Activated T-helper 1 cell treated with anti-CD3 and anti-CD28 coated beads, Interleukin-12 subunit alpha, Interleukin-12 subunit beta, Interleukin-2, Interleukin-4 antibody, amounts not matched to agents 30 ng/mL and 10 ng/mL and 1 ng/mL, durations not matched to agents 14 hours and 24 hours and 36 hours (primary cell): ENCODE measurements at regions of chr7 and their contacts with region 1.

Region 1: DNA sequence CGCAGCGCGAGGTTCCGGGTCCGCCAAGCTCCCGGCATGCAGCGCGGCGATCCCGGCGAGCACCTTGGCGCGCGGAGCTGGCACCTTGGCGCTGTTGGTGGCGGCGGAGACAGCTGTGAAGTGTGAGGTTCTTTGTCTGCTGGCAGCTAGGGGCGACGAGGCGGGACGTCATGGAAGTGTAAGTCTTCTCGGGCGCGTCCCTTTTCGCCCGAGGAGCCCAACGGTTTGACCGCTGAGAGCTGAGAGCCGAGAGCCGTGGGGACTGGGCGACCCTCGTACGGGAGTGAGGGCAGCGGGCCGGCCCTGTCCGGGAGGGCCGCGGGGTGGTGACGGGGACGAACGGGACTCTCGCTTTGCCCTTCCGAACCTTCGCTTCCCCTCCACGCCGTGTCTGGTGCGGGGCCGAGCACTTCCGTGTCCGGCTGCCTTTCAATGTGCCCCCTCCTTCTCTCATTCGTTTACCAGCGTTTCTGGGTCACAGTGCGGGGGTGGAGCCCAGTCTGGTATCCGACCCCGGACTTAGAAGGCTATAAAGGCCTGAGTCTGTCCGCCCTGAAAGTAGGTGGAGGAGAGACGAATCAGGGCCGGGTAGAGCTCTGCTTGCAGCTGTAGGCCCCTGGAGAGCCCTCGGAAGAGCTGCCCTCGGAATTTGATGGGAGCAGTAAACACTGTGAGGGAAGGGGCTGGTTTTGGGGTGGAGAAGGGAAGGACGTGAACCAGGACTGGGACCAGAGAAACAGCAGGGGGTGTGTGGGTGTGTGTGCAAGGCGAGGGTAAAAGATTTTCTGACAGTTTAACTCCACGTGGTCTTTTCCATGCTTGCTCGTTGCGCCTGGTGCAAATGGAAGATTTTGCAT is at the start of gene CRCP:
- DNase-seq: peak; percentile 79
- H3K4me3 Mint-ChIP-seq: peak within 1 kb of the TSS; percentile 99
- H3K27ac Mint-ChIP-seq: peak within 1 kb of the TSS; percentile 95
- H3K4me1 Mint-ChIP-seq: peaks cover 40% of the 10 kb centered on the region
- H3K27me3 Mint-ChIP-seq: no peaks in the 10 kb centered on the region
- total RNA-seq, gene CRCP: 41.0 and 44.1 TPM in 2 replicates

Region 2: GRCh38 chr7:65981965-65982792 is 132.8 kb before region 1 on chr7 and contains the start of gene GUSB:
- intact Hi-C with region 1: loop called (anchors 2 kb)
- DNase-seq: peak; percentile 88
- H3K4me3 Mint-ChIP-seq: peak within 1 kb of the TSS; percentile 87
- H3K27ac Mint-ChIP-seq: peak within 1 kb of the TSS; percentile 90
- H3K4me1 Mint-ChIP-seq: peaks cover 7% of the 10 kb centered on the region
- H3K27me3 Mint-ChIP-seq: no peaks in the 10 kb centered on the region
- total RNA-seq, gene GUSB: 49.7 and 50.1 TPM in 2 replicates

Region 3: GRCh38 chr7:66060796-66061195 is 54.2 kb before region 1 on chr7:
- intact Hi-C with region 1: no loop called
- DNase-seq: no peak
- H3K4me3 Mint-ChIP-seq: no peak overlapping the region
- H3K27ac Mint-ChIP-seq: no peak overlapping the region
- H3K4me1 Mint-ChIP-seq: no peaks in the 10 kb centered on the region
- H3K27me3 Mint-ChIP-seq: peaks cover 2% of the 10 kb centered on the region

Region 4: GRCh38 chr7:66083677-66084076 is 31.3 kb before region 1 on chr7:
- intact Hi-C with region 1: no loop called
- DNase-seq: no peak
- H3K4me3 Mint-ChIP-seq: no peak overlapping the region
- H3K27ac Mint-ChIP-seq: no peak overlapping the region
- H3K4me1 Mint-ChIP-seq: no peaks in the 10 kb centered on the region
- H3K27me3 Mint-ChIP-seq: no peaks in the 10 kb centered on the region

Region 5: DNA sequence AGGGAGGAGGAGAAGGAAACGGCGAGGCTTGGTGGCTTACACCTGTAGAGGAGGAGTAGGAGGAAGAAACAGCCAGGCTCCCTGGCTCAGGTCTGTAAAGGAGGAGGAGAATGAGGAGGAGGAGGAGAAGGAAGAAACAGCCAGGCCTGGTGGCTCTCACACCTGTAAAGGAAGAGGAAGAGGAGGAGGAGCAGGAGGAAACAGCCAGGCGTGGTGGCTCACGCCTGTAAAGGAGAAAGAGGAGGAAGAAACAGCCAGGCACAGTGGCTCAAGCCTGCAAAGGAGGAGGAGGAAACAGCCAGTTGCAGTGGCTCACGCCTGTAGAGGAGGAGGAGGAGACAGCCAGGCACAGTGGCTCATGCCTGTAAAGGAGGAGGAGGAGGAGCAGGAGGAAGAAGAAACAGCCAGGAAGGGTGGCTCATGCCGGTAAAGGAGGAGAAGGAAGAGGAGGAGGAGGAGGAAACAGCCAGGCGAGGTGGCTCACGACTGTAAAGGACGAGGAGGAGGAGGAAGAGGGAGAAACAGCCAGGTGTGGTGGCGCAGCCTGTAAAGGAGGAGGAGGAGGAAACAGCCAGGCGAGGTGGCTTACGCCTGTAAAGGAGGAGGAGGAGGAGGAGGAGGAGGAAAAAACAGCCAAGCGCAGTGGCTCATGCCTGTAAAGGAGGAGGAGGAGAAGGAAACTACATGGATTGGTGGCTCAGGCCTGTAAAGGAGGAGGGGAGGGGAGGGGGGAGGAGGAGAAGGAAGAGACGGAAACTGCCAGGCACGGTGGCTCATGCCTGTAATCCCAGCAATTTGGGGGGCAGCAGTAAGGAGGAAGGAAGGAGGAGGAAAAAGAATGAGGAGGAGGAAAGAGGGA is 15.2 kb before region 1 on chr7:
- intact Hi-C with region 1: loop called (anchors 2 kb)
- DNase-seq: peak; percentile 16
- H3K4me3 Mint-ChIP-seq: peak overlapping the region; percentile 88
- H3K27ac Mint-ChIP-seq: peak overlapping the region; percentile 95
- H3K4me1 Mint-ChIP-seq: peaks cover 11% of the 10 kb centered on the region
- H3K27me3 Mint-ChIP-seq: no peaks in the 10 kb centered on the region

Region 6: GRCh38 chr7:66204822-66205740 is 90.1 kb after region 1 on chr7 and contains the start of gene TPST1:
- intact Hi-C with region 1: loop called (anchors 10 kb)
- DNase-seq: peak; percentile 77
- H3K4me3 Mint-ChIP-seq: peak within 1 kb of the TSS; percentile 92
- H3K27ac Mint-ChIP-seq: peak within 1 kb of the TSS; percentile 49
- H3K4me1 Mint-ChIP-seq: peaks cover 29% of the 10 kb centered on the region
- H3K27me3 Mint-ChIP-seq: peaks cover 36% of the 10 kb centered on the region
- total RNA-seq, gene TPST1: 1.6 and 1.8 TPM in 2 replicates